ENCODE measurements at regions of chr3 and their contacts with region 1.

Region 1: GRCh38 chr3:196518966-196519717 is 4.0 kb upstream of the SMCO1 start:
- DNase-seq: peak; percentile 64
- H3K4me3 ChIP-seq: no peak overlapping the region
- H3K27ac ChIP-seq: no peak overlapping the region
- H3K4me1 ChIP-seq: no peaks in the 10 kb centered on the region
- H3K27me3 ChIP-seq: no peaks in the 10 kb centered on the region
- CTCF ChIP-seq: peak; percentile 32

Region 2: DNA sequence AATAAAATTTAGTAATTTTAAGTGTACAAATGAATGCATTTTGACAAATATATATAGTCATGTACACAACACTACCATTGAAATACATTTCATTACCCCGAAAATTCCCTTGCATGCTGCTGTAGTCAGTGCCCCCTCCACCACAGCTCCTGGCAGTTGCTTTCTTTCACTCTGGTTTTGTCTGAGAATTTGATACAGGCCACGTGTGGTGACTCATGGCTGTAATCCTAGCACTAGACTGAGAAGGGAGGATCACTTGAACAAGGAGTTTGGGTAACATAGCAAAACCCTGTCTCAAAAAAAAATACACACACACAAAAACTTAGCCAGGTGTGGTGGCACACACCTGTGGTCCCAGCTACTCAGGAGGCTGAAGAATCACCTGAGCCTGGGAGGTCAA is 502.7 kb before region 1 on chr3:
- intact Hi-C with region 1: no loop called
- DNase-seq: no peak
- H3K4me3 ChIP-seq: no peak overlapping the region
- H3K27ac ChIP-seq: no peak overlapping the region
- H3K4me1 ChIP-seq: no peaks in the 10 kb centered on the region
- H3K27me3 ChIP-seq: no peaks in the 10 kb centered on the region
- CTCF ChIP-seq: no peak

Region 3: DNA sequence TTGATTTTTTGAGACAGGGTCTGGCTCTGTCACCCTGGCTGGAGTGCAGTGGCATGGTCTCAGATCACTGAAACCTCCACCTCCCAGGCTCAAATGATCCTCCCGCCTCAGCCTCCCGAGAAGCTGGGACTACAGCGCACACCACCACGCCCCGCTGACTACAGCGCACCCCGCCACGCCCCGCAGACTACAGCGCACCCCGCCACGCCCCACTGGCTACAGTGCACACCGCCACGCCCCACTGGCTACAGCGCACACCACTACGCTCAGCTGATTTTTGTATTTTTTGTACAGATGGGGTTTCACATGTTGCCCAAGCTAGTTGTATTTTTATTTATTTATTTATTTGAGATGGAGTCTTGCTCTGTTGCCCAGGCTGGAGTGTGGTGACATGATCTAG is 267.2 kb before region 1 on chr3:
- intact Hi-C with region 1: loop called (anchors 2 kb)
- DNase-seq: no peak
- H3K4me3 ChIP-seq: no peak overlapping the region
- H3K27ac ChIP-seq: no peak overlapping the region
- H3K4me1 ChIP-seq: no peaks in the 10 kb centered on the region
- H3K27me3 ChIP-seq: no peaks in the 10 kb centered on the region
- CTCF ChIP-seq: no peak

Region 4: DNA sequence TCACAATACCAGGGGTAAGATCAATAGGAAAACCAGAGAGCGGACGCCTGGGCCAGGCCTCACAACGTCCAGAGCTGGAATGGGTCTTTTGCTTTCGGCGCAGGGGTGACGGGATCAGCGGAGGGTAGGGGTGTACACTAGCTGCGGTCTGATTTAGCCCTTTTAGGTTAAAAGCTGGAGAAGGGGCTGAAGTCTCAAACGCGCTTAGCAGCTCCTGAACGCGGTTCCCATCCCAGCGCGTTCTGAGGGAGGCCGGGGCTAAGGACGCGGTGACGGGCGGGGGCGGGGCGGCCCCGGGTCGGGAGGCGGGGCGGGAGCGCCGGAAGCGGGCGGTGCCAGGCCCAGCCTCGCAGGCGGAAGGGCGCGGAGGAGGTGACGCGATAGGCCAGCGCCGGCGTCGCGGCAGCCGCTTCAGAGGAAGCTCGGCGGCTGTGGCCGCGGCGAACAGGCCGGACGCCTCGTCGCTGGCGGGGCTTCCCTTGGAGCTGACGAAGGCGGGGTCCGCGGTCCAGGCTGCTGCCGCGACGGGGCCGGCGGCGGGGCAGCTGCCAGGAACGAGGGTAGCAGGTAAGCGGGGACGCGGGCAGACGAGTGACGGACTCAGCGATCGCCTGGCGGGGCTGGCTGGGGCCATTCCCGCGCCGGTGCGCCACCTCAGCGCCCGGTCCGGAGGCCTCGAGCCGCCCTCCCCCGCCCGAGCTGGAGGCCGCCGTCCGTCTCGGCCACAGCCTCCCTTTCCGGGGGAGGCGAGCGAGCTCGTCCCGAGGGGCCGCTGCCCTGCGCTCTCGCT is 348.6 kb after region 1 on chr3 and contains the start of gene SENP5:
- intact Hi-C with region 1: no loop called
- DNase-seq: peak; percentile 92
- H3K4me3 ChIP-seq: peak within 1 kb of the TSS; percentile 84
- H3K27ac ChIP-seq: peak within 1 kb of the TSS; percentile 85
- H3K4me1 ChIP-seq: peaks cover 4% of the 10 kb centered on the region
- H3K27me3 ChIP-seq: no peaks in the 10 kb centered on the region
- CTCF ChIP-seq: no peak
- total RNA-seq, gene SENP5: 22.0 to 25.0 TPM